ENCODE measurements at regions of chr7 and their contacts with region 1.

Region 1: DNA sequence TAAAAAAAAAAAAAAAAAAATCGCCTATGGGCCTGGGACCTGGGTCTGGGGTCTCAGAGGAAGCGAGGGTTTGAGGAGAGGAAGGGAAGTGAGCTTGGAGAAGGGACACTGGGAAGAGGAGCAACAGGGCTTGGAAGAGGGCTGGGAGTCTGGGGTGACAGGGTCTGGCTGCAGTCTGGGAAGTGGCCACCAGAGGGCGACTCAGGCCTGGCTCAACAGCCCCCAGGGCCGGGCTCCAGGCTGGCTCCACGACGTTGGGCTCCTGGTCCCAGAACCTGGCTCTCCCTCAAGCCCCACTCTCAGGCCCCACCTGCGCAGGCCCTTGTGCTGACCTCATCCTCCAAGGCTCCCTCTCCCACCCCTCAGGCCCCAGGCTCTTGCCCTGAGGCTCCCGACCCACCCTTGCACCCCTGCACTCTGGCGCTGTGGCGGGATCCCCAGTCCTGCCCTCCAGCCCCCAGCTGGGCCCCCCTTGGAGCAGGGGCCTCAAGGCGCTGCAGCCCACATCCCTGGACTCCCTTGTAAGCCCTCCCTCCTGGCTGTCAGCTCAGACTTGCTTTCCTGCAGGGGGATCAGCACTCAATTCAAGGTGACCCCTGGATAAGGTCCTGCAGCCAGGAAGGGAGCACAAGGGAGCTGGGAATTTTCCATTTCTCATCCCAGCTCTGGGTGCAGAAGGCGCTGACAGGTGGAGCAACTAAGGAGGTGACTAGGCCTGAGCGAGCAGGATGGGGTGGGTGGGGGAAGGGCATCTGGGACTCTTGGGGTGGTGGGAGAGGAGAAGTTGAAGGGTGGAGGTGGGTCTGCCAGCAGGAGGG is 5.4 kb upstream of the SPACDR start:
- DNase-seq: peak; percentile 88 to 94
- ATAC-seq: peak; percentile 84 to 87 (median 86)
- H3K4me3 ChIP-seq: no peak overlapping the region
- H3K27ac ChIP-seq: no peak overlapping the region
- H3K4me1 ChIP-seq: peaks cover 11% of the 10 kb centered on the region
- H3K27me3 ChIP-seq: no peaks in the 10 kb centered on the region
- CTCF ChIP-seq: peak; percentile 92

Region 2: DNA sequence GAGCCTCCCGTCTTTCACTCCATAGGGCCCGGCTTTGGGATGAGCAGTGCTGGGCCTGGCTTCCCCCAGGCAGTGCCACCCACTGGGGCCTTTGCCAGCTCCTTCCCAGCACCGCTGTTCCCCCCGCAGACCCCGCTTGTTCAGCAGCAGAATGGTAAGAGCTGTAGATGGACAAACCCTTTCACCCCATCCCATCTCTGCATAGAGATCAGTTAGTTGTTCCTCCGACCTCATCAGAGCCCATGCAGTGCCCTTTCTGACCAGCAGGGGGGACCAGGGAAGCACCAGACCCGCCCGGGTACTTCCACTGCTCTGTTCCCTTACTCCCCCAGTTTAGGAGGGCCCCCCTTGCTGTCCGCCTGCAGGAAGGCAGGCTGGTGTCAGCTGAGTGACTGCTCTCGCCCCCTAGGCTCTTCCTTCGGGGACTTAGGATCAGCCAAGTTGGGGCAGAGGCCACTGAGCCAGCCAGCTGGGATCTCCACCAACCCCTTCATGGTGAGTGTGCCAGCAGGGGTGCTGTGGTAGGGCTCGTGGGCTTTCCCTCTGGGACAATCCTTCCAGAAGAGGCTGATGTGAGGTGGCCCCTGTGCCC is 94.5 kb after region 1 on chr7:
- intact Hi-C with region 1: loop called (anchors 1 to 5 kb)
- DNase-seq: peak; percentile 83 to 89
- ATAC-seq: peak; percentile 62 to 82 (median 70)
- H3K4me3 ChIP-seq: no peak overlapping the region
- H3K27ac ChIP-seq: no peak overlapping the region
- H3K4me1 ChIP-seq: no peaks in the 10 kb centered on the region
- H3K27me3 ChIP-seq: no peaks in the 10 kb centered on the region
- CTCF ChIP-seq: peak; percentile 90

Region 3: GRCh38 chr7:100719523-100720319 is 250.3 kb after region 1 on chr7:
- intact Hi-C with region 1: loop called (anchors 2 to 10 kb)
- DNase-seq: no peak
- ATAC-seq: no peak
- H3K4me3 ChIP-seq: no peak overlapping the region
- H3K27ac ChIP-seq: no peak overlapping the region
- H3K4me1 ChIP-seq: no peaks in the 10 kb centered on the region
- H3K27me3 ChIP-seq: peaks cover 0 to 42% (median 14%) of the 10 kb centered on the region in 3 donors
- CTCF ChIP-seq: no peak